ENCODE measurements at regions of chr5 and their contacts with region 1.

Region 1: DNA sequence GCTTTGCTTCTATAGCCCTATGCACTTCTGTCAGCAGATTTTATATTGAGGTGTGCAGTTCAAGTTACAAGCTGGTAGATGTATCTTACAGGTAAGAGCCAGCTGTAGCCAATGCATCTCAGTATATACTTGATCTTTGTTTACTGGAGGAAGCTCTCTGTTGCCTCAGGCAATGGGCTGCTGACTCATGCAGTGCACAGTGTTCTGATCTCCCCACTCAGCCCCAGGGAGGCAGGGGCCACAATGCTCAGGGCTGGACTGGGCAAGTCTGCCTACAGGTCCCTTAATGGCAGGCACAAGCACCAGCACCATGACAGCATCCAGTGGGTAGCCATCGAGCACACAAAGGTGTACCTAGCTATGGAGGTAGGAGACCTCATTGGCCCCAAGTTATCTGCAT is 178.8 kb upstream of the CDH10 start:
- DNase-seq: peak; percentile 79
- H3K4me3 Mint-ChIP-seq: no peak overlapping the region
- H3K27ac Mint-ChIP-seq: peak overlapping the region; percentile 9
- H3K4me1 Mint-ChIP-seq: peaks cover 21% of the 10 kb centered on the region
- H3K27me3 Mint-ChIP-seq: no peaks in the 10 kb centered on the region
- CTCF ChIP-seq: no peak

Region 2: GRCh38 chr5:24788829-24789509 is 34.7 kb before region 1 on chr5:
- CTCF ChIA-PET with region 1: no interaction called
- POLR2A ChIA-PET with region 1: interaction called, 11 read pairs
- intact Hi-C with region 1: no loop called
- DNase-seq: peak; percentile 65
- H3K4me3 Mint-ChIP-seq: peak overlapping the region; percentile 48
- H3K27ac Mint-ChIP-seq: peak overlapping the region; percentile 98
- H3K4me1 Mint-ChIP-seq: peaks cover 21% of the 10 kb centered on the region
- H3K27me3 Mint-ChIP-seq: no peaks in the 10 kb centered on the region
- CTCF ChIP-seq: no peak

Measured in MCF 10A (cell line).